ENCODE measurements at regions of chr16 and their contacts with region 1.

Region 1: GRCh38 chr16:2867987-2868789 is 10.2 kb upstream of the PRSS22 start:
- DNase-seq: peak; percentile 98
- H3K4me3 ChIP-seq: peak overlapping the region; percentile 61 to 71
- H3K27ac ChIP-seq: peak overlapping the region; percentile 90 to 95
- H3K4me1 ChIP-seq: peaks cover 4 to 5% of the 10 kb centered on the region in 2 experiments; a peak in 3 of 4 replicates
- H3K27me3 ChIP-seq: no peaks in the 10 kb centered on the region
- CTCF ChIP-seq: peak; percentile 94
- EP300 ChIP-seq: peak in 1 of 2 experiments; percentile 11; a peak in 1 of 4 replicates
- RAD21 ChIP-seq: peak; percentile 92

Region 2: GRCh38 chr16:2500918-2501750 is 367.1 kb before region 1 on chr16:
- CTCF ChIA-PET with region 1: no interaction called
- POLR2A ChIA-PET with region 1: no interaction called
- DNase-seq: peak; percentile 95
- H3K4me3 ChIP-seq: peak overlapping the region; percentile 27 to 34; a peak in 2 of 4 replicates
- H3K27ac ChIP-seq: peak overlapping the region in 1 of 2 experiments; percentile 50; a peak in 1 of 4 replicates
- H3K4me1 ChIP-seq: peaks cover 0 to 27% of the 10 kb centered on the region in 2 experiments; a peak in 1 of 4 replicates
- H3K27me3 ChIP-seq: no peaks in the 10 kb centered on the region
- CTCF ChIP-seq: peak; percentile 96
- EP300 ChIP-seq: no peak
- RAD21 ChIP-seq: peak; percentile 96

Region 3: GRCh38 chr16:2682209-2683021 is 185.8 kb before region 1 on chr16 and contains the start of gene KCTD5:
- CTCF ChIA-PET with region 1: interaction called, 3 read pairs
- POLR2A ChIA-PET with region 1: interaction called, 11 read pairs
- DNase-seq: peak; percentile 98
- H3K4me3 ChIP-seq: peak within 1 kb of the TSS; percentile 96 to 100
- H3K27ac ChIP-seq: peak within 1 kb of the TSS; percentile 84 to 85
- H3K4me1 ChIP-seq: peaks cover 0 to 3% of the 10 kb centered on the region in 2 experiments; a peak in 2 of 4 replicates
- H3K27me3 ChIP-seq: no peaks in the 10 kb centered on the region
- CTCF ChIP-seq: no peak
- EP300 ChIP-seq: peak in 1 of 2 experiments; percentile 20; a peak in 1 of 4 replicates
- RAD21 ChIP-seq: no peak
- polyA plus RNA-seq, gene KCTD5: 53.4 and 57.1 TPM in 2 replicates

Region 4: DNA sequence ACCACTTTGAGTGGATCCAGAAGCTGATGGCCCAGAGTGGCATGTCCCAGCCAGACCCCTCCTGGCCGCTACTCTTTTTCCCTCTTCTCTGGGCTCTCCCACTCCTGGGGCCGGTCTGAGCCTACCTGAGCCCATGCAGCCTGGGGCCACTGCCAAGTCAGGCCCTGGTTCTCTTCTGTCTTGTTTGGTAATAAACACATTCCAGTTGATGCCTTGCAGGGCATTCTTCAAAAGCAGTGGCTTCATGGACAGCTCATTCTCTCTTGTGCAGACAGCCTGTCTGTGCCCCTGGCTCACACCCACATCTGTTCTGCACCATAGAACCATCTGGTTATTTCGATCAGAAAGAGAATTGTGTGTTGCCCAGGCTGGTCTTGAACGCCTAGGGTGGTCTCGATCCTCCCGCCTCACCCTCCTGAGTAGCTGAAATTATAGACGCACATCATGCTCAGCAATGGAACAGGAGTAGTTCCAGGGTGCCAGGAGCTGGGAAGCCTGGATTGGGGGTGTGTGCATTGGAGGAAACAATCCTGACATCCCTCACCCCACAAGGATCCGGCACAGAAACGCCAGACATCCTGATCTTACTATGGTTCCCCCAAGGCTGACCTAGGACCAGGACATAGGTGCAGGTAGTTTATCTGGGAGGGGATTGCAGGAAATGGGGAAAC is 46.6 kb before region 1 on chr16:
- CTCF ChIA-PET with region 1: interaction called, 10 read pairs
- POLR2A ChIA-PET with region 1: no interaction called
- DNase-seq: peak; percentile 66
- H3K4me3 ChIP-seq: no peak overlapping the region
- H3K27ac ChIP-seq: peak overlapping the region in 1 of 2 experiments; percentile 74; a peak in 2 of 4 replicates
- H3K4me1 ChIP-seq: peaks cover 0 to 24% of the 10 kb centered on the region in 2 experiments; a peak in 1 of 4 replicates
- H3K27me3 ChIP-seq: no peaks in the 10 kb centered on the region
- CTCF ChIP-seq: no peak
- EP300 ChIP-seq: peak in 1 of 2 experiments; percentile 33; a peak in 1 of 4 replicates
- RAD21 ChIP-seq: peak; percentile 5; the same call in 1 of the 2 replicates

Region 5: GRCh38 chr16:2838928-2839327 is 29.3 kb before region 1 on chr16:
- CTCF ChIA-PET with region 1: interaction called, 144 read pairs
- POLR2A ChIA-PET with region 1: interaction called, 23 read pairs
- DNase-seq: peak; percentile 90
- H3K4me3 ChIP-seq: no peak overlapping the region
- H3K27ac ChIP-seq: no peak overlapping the region
- H3K4me1 ChIP-seq: peaks cover 0 to 4% of the 10 kb centered on the region in 2 experiments; a peak in 1 of 4 replicates
- H3K27me3 ChIP-seq: no peaks in the 10 kb centered on the region
- CTCF ChIP-seq: peak; percentile 79
- EP300 ChIP-seq: no peak
- RAD21 ChIP-seq: peak; percentile 86

Region 6: GRCh38 chr16:2854700-2855309 is 13.4 kb before region 1 on chr16:
- CTCF ChIA-PET with region 1: interaction called, 18 read pairs
- POLR2A ChIA-PET with region 1: interaction called, 7 read pairs
- DNase-seq: peak; percentile 46
- H3K4me3 ChIP-seq: no peak overlapping the region
- H3K27ac ChIP-seq: no peak overlapping the region
- H3K4me1 ChIP-seq: peaks cover 0 to 6% of the 10 kb centered on the region in 2 experiments; a peak in 1 of 4 replicates
- H3K27me3 ChIP-seq: no peaks in the 10 kb centered on the region; the same call in none of the 2 replicates
- CTCF ChIP-seq: peak; percentile 58
- EP300 ChIP-seq: no peak
- RAD21 ChIP-seq: no peak

Region 7: GRCh38 chr16:2911580-2912329 is 43.6 kb after region 1 on chr16 and contains the start of gene FLYWCH1:
- CTCF ChIA-PET with region 1: interaction called, 10 read pairs
- POLR2A ChIA-PET with region 1: interaction called, 6 read pairs
- DNase-seq: peak; percentile 97
- H3K4me3 ChIP-seq: peak within 1 kb of the TSS; percentile 65 to 96
- H3K27ac ChIP-seq: peak within 1 kb of the TSS; percentile 53 to 65; a peak in 3 of 4 replicates
- H3K4me1 ChIP-seq: peaks cover 7 to 17% of the 10 kb centered on the region in 2 experiments; a peak in 3 of 4 replicates
- H3K27me3 ChIP-seq: no peaks in the 10 kb centered on the region
- CTCF ChIP-seq: no peak
- EP300 ChIP-seq: no peak
- RAD21 ChIP-seq: no peak
- polyA plus RNA-seq, gene FLYWCH1: 22.4 and 30.1 TPM in 2 replicates

Region 8: DNA sequence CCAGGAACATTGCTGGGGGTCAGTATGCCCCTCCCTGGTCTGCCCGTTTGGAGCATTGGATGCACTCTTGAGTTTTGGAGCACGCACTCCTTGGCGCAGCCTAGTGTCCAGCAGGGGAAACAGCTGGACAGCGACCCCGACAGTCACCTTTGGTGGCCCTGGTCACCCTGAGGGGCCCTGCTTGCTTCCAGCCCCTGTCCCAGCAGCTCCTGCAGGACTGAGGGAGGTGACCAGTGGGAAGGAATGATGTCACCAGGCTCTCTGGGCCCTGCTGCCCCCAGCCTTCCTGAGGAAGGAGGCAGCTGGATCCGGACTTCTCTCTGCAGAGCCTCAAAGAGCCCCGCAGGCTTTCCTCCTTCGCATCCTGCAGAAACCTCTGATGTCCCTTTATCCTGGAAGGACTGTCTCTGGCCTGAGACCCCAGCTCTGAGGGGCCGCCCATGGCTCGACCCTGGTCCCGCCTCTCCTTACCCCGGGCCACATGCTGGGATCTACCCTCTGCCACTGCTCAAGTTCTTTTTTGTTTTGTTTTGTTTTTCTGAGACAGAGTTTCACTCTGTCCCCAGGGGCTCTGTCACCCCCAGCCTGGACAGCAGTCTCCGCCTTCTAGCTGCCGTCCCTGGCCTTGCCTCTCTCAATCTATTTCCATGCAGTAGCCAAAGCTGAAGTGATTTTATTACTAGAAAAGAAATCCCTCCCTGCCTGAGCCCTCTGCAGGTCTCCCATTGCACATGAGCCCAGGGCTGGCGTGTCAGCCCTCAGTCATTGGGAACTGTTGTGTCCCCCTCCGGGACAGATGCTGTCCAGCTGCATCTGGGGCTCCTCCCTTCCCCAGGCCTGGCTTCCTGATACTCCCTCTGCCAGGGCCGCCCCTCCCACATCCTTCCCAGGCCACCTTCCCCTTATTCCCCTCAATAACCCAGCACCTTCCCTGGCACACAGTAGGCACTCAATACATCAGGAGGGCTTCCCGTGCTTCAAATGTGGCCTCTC is 219.4 kb after region 1 on chr16:
- CTCF ChIA-PET with region 1: no interaction called
- POLR2A ChIA-PET with region 1: no interaction called
- DNase-seq: no peak
- H3K4me3 ChIP-seq: no peak overlapping the region
- H3K27ac ChIP-seq: no peak overlapping the region
- H3K4me1 ChIP-seq: no peaks in the 10 kb centered on the region; a peak in 1 of 4 replicates
- H3K27me3 ChIP-seq: peaks cover 58% of the 10 kb centered on the region
- CTCF ChIP-seq: no peak; the same call in 1 of the 2 replicates
- EP300 ChIP-seq: no peak
- RAD21 ChIP-seq: no peak

Measured in SK-N-SH (cell line).